Ascending aorta (tissue), 2 donors: ENCODE measurements at regions of chr4 and their contacts with region 1.

Region 1: GRCh38 chr4:157075811-157076577 is at the start of gene GLRB:
- DNase-seq: peak in 1 of 2 donors; percentile 66
- H3K4me3 ChIP-seq: peak within 1 kb of the TSS; percentile 75 to 91
- H3K27ac ChIP-seq: peak within 1 kb of the TSS; percentile 33 to 66
- H3K4me1 ChIP-seq: no peaks in the 10 kb centered on the region
- H3K27me3 ChIP-seq: no peaks in the 10 kb centered on the region
- CTCF ChIP-seq: no peak
- total RNA-seq, gene GLRB: 8.4 TPM

Region 2: GRCh38 chr4:157004279-157005161 is 71.5 kb before region 1 on chr4:
- intact Hi-C with region 1: loop called (anchors 1 kb)
- DNase-seq: no peak
- H3K4me3 ChIP-seq: peak overlapping the region in 1 of 2 donors; percentile 27
- H3K27ac ChIP-seq: peak overlapping the region; percentile 19 to 51
- H3K4me1 ChIP-seq: peaks cover 0 to 15% of the 10 kb centered on the region in 2 donors
- H3K27me3 ChIP-seq: no peaks in the 10 kb centered on the region
- CTCF ChIP-seq: no peak

Region 3: DNA sequence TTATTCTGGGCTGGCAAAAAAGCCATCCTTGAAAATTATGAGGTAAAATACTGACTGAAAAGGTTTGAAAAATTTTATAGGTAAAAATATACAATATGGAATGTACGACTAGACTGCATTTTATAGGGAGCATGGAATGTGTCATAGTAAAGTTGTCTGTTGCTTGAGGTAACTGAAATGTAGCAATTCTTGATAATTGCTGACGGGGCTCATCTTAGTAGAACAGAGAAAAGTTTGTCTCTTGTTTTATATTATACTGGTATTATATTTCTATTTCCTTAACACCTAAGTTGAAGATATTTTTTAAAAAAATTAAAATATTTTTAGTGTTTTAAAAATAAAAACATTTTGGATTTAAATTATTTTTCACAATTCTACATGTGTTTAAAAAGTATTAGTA is 155.5 kb after region 1 on chr4:
- intact Hi-C with region 1: no loop called
- DNase-seq: no peak
- H3K4me3 ChIP-seq: no peak overlapping the region
- H3K27ac ChIP-seq: no peak overlapping the region
- H3K4me1 ChIP-seq: no peaks in the 10 kb centered on the region
- H3K27me3 ChIP-seq: no peaks in the 10 kb centered on the region
- CTCF ChIP-seq: no peak